ENCODE measurements at regions of chr1 and their contacts with region 1.

Region 1: GRCh38 chr1:46616277-46617107 is at the start of gene MOB3C:
- DNase-seq: peak; percentile 72
- ATAC-seq: peak; percentile 77
- H3K4me3 Mint-ChIP-seq: peak within 1 kb of the TSS; percentile 92
- H3K27ac Mint-ChIP-seq: peak within 1 kb of the TSS; percentile 86
- H3K4me1 Mint-ChIP-seq: peaks cover 68% of the 10 kb centered on the region
- H3K27me3 Mint-ChIP-seq: no peaks in the 10 kb centered on the region
- total RNA-seq, gene MOB3C: 20.1 to 20.9 TPM

Region 2: GRCh38 chr1:46724991-46725735 is 108.7 kb after region 1 on chr1:
- CTCF ChIA-PET with region 1: interaction called, 10 read pairs
- POLR2A ChIA-PET with region 1: interaction called, 3 read pairs
- DNase-seq: peak; percentile 84
- ATAC-seq: peak; percentile 98
- H3K4me3 Mint-ChIP-seq: no peak overlapping the region
- H3K27ac Mint-ChIP-seq: no peak overlapping the region
- H3K4me1 Mint-ChIP-seq: peaks cover 5% of the 10 kb centered on the region
- H3K27me3 Mint-ChIP-seq: peaks cover 23% of the 10 kb centered on the region

Measured in activated CD8-positive, alpha-beta T cell treated with anti-CD3 and anti-CD28 coated beads, Interleukin-2, amount 10 ng/mL, durations not matched to agents 7 days and 5 days (primary cell).